MCF 10A (cell line): ENCODE measurements at regions of chr2 and their contacts with region 1.

Region 1: DNA sequence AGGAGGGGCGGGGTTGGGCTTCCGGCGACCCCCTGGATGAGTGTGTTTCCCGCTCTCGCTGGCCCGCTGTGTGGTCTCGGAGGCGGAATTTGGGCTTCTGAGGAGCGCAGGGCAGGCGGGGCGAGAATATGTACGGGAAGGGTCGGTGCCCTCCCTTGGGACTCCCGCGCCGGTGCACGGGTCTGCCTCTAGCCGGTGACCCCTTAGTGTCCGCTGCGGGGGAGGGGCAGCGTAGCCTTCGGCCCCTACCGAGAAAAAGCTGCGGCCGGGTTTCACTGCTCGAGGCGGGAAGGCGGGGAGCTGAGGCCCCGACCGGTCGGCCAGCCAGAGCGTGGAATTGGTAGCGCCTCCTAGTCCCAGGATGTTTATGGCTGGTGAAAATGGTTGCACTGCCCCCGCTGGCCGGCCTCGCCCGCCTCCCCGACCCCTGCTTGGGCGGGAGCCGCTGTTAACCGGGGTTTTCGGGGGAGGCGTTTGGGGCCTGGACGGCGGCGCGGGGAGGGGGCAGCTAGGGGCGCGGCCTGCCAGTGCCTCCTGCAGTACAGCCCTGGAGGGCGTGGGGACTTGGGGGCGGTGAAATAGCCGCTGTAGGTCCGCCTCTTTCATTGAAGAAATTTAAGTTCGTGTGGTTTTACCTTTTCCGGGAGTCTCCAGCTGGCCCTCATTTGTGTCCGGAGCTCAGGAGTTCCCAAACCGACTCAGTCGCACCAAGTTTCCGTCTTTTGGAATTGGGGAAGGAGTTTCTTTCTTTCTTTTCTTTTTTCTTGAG is at the start of gene UGP2:
- DNase-seq: peak; percentile 92
- H3K4me3 Mint-ChIP-seq: peak within 1 kb of the TSS; percentile 93
- H3K27ac Mint-ChIP-seq: peak within 1 kb of the TSS; percentile 96
- H3K4me1 Mint-ChIP-seq: peaks cover 13% of the 10 kb centered on the region
- H3K27me3 Mint-ChIP-seq: no peaks in the 10 kb centered on the region
- CTCF ChIP-seq: no peak
- total RNA-seq, gene UGP2: 77.3 and 78.4 TPM in 2 replicates

Region 2: GRCh38 chr2:63588385-63589147 is 252.9 kb before region 1 on chr2 and contains the starts of genes MDH1 and WDPCP:
- CTCF ChIA-PET with region 1: no interaction called
- POLR2A ChIA-PET with region 1: interaction called, 107 read pairs
- intact Hi-C with region 1: loop called (anchors 10 kb)
- DNase-seq: peak; percentile 99
- H3K4me3 Mint-ChIP-seq: peak within 1 kb of the TSS; percentile 98
- H3K27ac Mint-ChIP-seq: peak within 1 kb of the TSS; percentile 94
- H3K4me1 Mint-ChIP-seq: peaks cover 19% of the 10 kb centered on the region
- H3K27me3 Mint-ChIP-seq: no peaks in the 10 kb centered on the region
- CTCF ChIP-seq: no peak
- total RNA-seq, gene MDH1: 105 and 110 TPM in 2 replicates
- total RNA-seq, gene WDPCP: 6.9 and 8.0 TPM in 2 replicates

Region 3: DNA sequence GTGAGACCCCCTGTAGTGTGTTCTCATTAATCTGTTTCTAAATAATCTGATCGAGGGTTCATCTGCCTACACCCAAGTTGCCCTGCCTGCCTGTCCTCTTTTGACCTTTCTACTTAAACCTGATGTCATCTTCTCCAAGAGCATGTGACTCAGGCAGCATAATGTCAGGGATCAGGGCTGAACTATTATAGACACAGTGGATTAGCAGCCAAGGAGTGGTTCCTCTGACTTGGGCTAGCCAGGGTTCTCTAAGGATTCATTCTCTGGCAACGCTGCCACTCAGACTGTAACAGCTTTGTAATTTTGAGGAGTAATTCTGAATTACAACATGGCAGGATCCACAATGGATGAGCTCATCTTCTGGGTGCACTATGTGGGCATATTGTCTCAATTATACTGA is 128.7 kb before region 1 on chr2:
- CTCF ChIA-PET with region 1: no interaction called
- POLR2A ChIA-PET with region 1: interaction called, 17 read pairs
- intact Hi-C with region 1: no loop called
- DNase-seq: no peak
- H3K4me3 Mint-ChIP-seq: no peak overlapping the region
- H3K27ac Mint-ChIP-seq: no peak overlapping the region
- H3K4me1 Mint-ChIP-seq: no peaks in the 10 kb centered on the region
- H3K27me3 Mint-ChIP-seq: no peaks in the 10 kb centered on the region
- CTCF ChIP-seq: no peak

Region 4: GRCh38 chr2:63741874-63742583 is 99.4 kb before region 1 on chr2:
- CTCF ChIA-PET with region 1: interaction called, 6 read pairs
- POLR2A ChIA-PET with region 1: interaction called, 321 read pairs
- intact Hi-C with region 1: loop called (anchors 2 kb)
- DNase-seq: no peak
- H3K4me3 Mint-ChIP-seq: no peak overlapping the region
- H3K27ac Mint-ChIP-seq: peak overlapping the region; percentile 12
- H3K4me1 Mint-ChIP-seq: peaks cover 34% of the 10 kb centered on the region
- H3K27me3 Mint-ChIP-seq: no peaks in the 10 kb centered on the region
- CTCF ChIP-seq: no peak

Region 5: DNA sequence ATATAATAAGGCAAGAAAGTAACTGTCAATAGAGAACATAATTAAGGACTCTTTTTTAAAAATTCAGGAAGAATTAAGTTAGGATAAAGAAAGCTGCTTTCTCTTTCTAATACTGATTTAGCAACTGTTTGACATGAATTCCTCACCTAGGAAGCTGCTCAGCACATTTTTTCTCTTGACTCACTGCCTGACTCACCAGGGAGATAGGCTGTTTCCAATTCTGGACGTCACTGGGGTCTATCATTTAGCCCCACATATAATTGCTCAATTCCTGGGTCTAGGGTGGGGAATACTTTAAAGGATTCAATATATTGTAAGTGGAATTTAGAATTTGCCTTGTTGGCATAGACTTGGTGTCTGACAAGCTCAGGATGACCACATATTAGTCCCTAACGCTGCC is 50.5 kb before region 1 on chr2:
- CTCF ChIA-PET with region 1: no interaction called
- POLR2A ChIA-PET with region 1: interaction called, 185 read pairs
- intact Hi-C with region 1: loop called (anchors 2 kb)
- DNase-seq: peak; percentile 78
- H3K4me3 Mint-ChIP-seq: peak overlapping the region; percentile 51
- H3K27ac Mint-ChIP-seq: peak overlapping the region; percentile 83
- H3K4me1 Mint-ChIP-seq: peaks cover 35% of the 10 kb centered on the region
- H3K27me3 Mint-ChIP-seq: no peaks in the 10 kb centered on the region
- CTCF ChIP-seq: no peak

Region 6: GRCh38 chr2:63861220-63861822 is 19.9 kb after region 1 on chr2:
- CTCF ChIA-PET with region 1: interaction called, 20 read pairs
- POLR2A ChIA-PET with region 1: interaction called, 248 read pairs
- intact Hi-C with region 1: no loop called
- DNase-seq: peak; percentile 67
- H3K4me3 Mint-ChIP-seq: no peak overlapping the region
- H3K27ac Mint-ChIP-seq: peak overlapping the region; percentile 69
- H3K4me1 Mint-ChIP-seq: peaks cover 22% of the 10 kb centered on the region
- H3K27me3 Mint-ChIP-seq: no peaks in the 10 kb centered on the region
- CTCF ChIP-seq: peak; percentile 60